ENCODE measurements at regions of chr3 and their contacts with region 1.

Region 1: GRCh38 chr3:169171739-169172138 is 491.8 kb downstream of the MECOM start:
- DNase-seq: no peak
- H3K4me3 ChIP-seq: no peak overlapping the region
- H3K27ac ChIP-seq: no peak overlapping the region
- H3K4me1 ChIP-seq: peaks cover 32% of the 10 kb centered on the region
- H3K27me3 ChIP-seq: no peaks in the 10 kb centered on the region
- CTCF ChIP-seq: no peak

Region 2: GRCh38 chr3:169232863-169233262 is 61.1 kb after region 1 on chr3:
- intact Hi-C with region 1: loop called (anchors 2 kb)
- DNase-seq: no peak
- H3K4me3 ChIP-seq: no peak overlapping the region
- H3K27ac ChIP-seq: peak overlapping the region; percentile 17
- H3K4me1 ChIP-seq: peaks cover 23% of the 10 kb centered on the region
- H3K27me3 ChIP-seq: no peaks in the 10 kb centered on the region
- CTCF ChIP-seq: no peak

Measured in left ventricle myocardium inferior (tissue), 1 donor.